Caco-2 (cell line): ENCODE measurements at regions of chr2 and their contacts with region 1.

Region 1: DNA sequence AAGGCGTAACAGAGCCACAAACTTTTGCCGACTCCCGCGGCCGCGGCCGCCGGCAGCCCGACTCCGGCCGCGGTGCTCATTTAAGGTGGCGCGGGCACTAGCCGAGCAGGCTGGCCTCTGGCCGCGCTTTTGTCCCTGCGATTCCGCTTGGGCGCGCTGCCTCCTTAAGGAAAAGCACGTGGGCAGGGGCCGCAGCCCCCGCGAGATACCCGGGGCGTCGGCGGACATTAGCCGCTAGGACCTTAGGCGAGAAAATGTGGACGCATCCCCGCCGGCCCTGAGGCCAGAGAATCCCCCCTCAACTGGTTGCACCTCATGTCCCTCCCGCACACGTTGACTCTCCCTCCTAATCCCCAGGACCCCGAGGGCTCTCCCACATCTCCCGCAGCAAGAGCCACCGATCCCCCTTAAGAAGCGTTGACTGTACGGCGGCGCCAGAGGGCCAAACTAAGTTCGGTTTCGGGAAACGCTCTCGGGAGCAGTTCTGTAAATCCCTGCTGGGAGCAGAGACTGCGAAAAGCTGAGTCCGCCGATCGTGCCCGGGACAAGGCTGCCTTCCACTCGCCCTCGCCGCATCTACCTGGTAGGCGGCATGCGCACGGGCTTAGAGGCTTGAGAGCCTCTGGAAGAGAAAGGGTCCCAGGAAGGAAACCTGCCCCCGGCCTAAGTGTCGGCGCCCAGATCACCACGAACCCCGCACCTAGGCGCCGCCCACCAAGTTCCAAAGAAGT is 1.7 kb upstream of the SATB2 start:
- DNase-seq: peak; percentile 90 to 91
- H3K4me3 ChIP-seq: peak overlapping the region; percentile 51
- H3K4me3 Mint-ChIP-seq: peak overlapping the region; percentile 96
- H3K27ac Mint-ChIP-seq: peak overlapping the region; percentile 88
- H3K4me1 ChIP-seq: peaks cover 23% of the 10 kb centered on the region
- H3K4me1 Mint-ChIP-seq: peaks cover 7% of the 10 kb centered on the region
- H3K27me3 ChIP-seq: peaks cover 3% of the 10 kb centered on the region
- H3K27me3 Mint-ChIP-seq: peaks cover 15% of the 10 kb centered on the region
- CTCF ChIP-seq: no peak

Region 2: GRCh38 chr2:198968545-198968944 is 490.9 kb before region 1 on chr2:
- CTCF ChIA-PET with region 1: no interaction called
- POLR2A ChIA-PET with region 1: no interaction called
- intact Hi-C with region 1: loop called (anchors 5 kb)
- DNase-seq: peak; percentile 59 to 72
- H3K4me3 ChIP-seq: no peak overlapping the region
- H3K4me3 Mint-ChIP-seq: no peak overlapping the region
- H3K27ac Mint-ChIP-seq: peak overlapping the region; percentile 8
- H3K4me1 ChIP-seq: peaks cover 14% of the 10 kb centered on the region; the same call in 1 of the 2 replicates
- H3K4me1 Mint-ChIP-seq: peaks cover 7% of the 10 kb centered on the region
- H3K27me3 ChIP-seq: no peaks in the 10 kb centered on the region
- H3K27me3 Mint-ChIP-seq: no peaks in the 10 kb centered on the region
- CTCF ChIP-seq: no peak

Region 3: GRCh38 chr2:199019898-199020507 is 439.4 kb before region 1 on chr2:
- CTCF ChIA-PET with region 1: no interaction called
- POLR2A ChIA-PET with region 1: no interaction called
- intact Hi-C with region 1: loop called (anchors 5 kb)
- DNase-seq: peak in 1 of 2 experiments; percentile 14
- H3K4me3 ChIP-seq: no peak overlapping the region
- H3K4me3 Mint-ChIP-seq: no peak overlapping the region
- H3K27ac Mint-ChIP-seq: no peak overlapping the region
- H3K4me1 ChIP-seq: no peaks in the 10 kb centered on the region
- H3K4me1 Mint-ChIP-seq: no peaks in the 10 kb centered on the region
- H3K27me3 ChIP-seq: no peaks in the 10 kb centered on the region
- H3K27me3 Mint-ChIP-seq: no peaks in the 10 kb centered on the region
- CTCF ChIP-seq: peak in 1 of 2 experiments; percentile 70

Region 4: DNA sequence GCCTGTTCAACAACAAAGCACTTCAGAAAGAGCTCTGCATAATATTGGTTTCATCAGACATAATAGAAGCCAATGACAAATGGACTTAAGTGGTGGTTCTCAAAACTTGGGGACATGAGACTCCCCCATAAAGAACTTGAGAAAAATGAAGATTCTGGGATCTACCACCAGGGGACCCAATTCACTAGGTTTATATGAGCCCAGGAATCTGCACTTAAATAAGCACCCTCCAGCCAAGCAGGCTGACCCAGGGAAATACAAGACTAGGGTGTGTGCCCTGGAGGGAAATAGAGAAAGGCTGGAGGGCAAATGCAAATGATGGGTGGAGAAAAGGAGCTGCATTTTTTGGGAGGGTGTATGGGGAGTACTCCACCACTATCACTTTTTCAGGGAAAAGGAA is 54.2 kb before region 1 on chr2:
- CTCF ChIA-PET with region 1: no interaction called
- POLR2A ChIA-PET with region 1: no interaction called
- intact Hi-C with region 1: loop called (anchors 2 kb)
- DNase-seq: no peak
- H3K4me3 ChIP-seq: no peak overlapping the region
- H3K4me3 Mint-ChIP-seq: no peak overlapping the region
- H3K27ac Mint-ChIP-seq: no peak overlapping the region
- H3K4me1 ChIP-seq: no peaks in the 10 kb centered on the region
- H3K4me1 Mint-ChIP-seq: no peaks in the 10 kb centered on the region
- H3K27me3 ChIP-seq: no peaks in the 10 kb centered on the region
- H3K27me3 Mint-ChIP-seq: peaks cover 4% of the 10 kb centered on the region
- CTCF ChIP-seq: peak; percentile 13 to 34

Region 5: DNA sequence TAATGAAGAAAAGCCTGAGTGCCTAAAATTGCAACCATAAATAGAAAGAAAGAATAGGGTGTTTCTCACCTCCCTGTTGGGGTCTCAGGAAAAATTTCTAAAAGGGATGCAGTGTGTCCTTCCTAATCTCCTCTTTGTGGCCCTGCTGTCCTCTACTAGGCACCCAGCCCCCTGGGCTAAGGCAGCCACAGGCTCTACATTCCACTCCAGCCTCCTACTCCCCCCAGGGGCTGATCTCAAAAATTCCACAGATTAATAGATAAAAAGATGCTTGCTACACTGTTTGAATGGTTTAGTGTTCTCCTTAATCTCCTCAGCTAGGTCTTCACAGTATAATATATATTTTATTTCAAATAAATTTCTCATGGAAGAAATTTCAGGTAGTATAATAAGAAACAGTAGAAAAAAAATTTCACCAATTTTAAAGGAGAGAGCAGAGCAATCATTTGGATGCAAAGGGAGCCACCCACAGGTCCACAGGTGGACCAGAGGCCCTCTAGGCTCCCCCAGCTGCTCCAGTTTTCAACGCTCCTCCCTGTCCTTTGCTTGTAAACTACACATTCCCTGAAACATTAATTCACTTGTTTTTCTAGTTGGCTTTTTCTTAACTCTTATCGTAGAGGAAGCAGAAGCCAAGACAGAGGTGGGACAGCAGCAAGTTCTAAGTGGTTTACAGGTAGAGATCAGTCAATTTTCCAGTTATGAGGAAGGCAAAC is 19.2 kb before region 1 on chr2:
- CTCF ChIA-PET with region 1: no interaction called
- POLR2A ChIA-PET with region 1: no interaction called
- intact Hi-C with region 1: no loop called
- DNase-seq: no peak
- H3K4me3 ChIP-seq: no peak overlapping the region
- H3K4me3 Mint-ChIP-seq: no peak overlapping the region
- H3K27ac Mint-ChIP-seq: no peak overlapping the region
- H3K4me1 ChIP-seq: no peaks in the 10 kb centered on the region
- H3K4me1 Mint-ChIP-seq: no peaks in the 10 kb centered on the region
- H3K27me3 ChIP-seq: no peaks in the 10 kb centered on the region; the same call in 1 of the 2 replicates
- H3K27me3 Mint-ChIP-seq: peaks cover 6% of the 10 kb centered on the region
- CTCF ChIP-seq: no peak

Region 6: DNA sequence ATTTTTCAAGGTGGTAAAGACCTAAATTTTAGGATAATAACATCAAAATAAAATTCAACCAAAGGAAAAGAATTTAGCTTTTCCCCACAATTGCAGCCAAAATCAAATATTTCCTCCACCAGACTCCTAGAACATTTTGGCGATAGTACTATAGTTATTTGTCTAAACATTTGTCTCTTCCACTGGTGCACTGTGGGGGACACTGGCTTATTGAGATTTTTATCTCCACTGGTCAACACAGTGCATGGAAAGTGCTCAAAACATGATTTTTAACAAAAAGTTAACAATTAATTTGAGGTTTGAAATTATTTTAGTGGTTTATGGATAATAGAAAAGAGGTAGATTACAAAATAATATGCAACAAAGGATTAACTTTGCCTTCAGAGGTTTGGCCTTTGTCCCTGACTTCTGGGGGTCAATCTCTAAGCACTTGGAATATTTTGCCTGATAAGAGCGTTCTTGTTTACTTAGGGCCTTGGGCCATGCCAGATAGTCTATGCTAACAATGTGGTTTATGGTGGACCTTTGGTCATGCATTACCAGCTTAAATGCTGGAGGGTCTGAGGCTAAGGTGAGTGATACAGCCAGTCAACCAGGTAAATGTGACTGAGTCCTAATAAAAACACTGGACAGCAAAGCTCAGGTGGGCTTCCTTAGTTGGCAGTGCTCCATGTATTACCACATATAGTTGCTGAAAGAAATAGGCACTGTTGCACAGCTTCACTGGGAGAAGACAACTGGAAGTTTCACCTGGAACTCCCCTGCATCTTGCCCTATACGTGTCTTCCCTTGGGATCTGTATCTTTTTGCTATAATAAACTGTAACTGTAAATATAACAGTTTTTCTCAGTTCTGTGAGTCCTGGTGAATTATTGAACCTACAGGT is 65.5 kb after region 1 on chr2:
- CTCF ChIA-PET with region 1: no interaction called
- POLR2A ChIA-PET with region 1: no interaction called
- intact Hi-C with region 1: no loop called
- DNase-seq: peak; percentile 59 to 70
- H3K4me3 ChIP-seq: no peak overlapping the region
- H3K4me3 Mint-ChIP-seq: no peak overlapping the region
- H3K27ac Mint-ChIP-seq: no peak overlapping the region
- H3K4me1 ChIP-seq: peaks cover 19% of the 10 kb centered on the region
- H3K4me1 Mint-ChIP-seq: peaks cover 12% of the 10 kb centered on the region
- H3K27me3 ChIP-seq: no peaks in the 10 kb centered on the region
- H3K27me3 Mint-ChIP-seq: no peaks in the 10 kb centered on the region
- CTCF ChIP-seq: no peak